GM12878 (cell line): ENCODE measurements at regions of chr7 and their contacts with region 1.

Region 1: DNA sequence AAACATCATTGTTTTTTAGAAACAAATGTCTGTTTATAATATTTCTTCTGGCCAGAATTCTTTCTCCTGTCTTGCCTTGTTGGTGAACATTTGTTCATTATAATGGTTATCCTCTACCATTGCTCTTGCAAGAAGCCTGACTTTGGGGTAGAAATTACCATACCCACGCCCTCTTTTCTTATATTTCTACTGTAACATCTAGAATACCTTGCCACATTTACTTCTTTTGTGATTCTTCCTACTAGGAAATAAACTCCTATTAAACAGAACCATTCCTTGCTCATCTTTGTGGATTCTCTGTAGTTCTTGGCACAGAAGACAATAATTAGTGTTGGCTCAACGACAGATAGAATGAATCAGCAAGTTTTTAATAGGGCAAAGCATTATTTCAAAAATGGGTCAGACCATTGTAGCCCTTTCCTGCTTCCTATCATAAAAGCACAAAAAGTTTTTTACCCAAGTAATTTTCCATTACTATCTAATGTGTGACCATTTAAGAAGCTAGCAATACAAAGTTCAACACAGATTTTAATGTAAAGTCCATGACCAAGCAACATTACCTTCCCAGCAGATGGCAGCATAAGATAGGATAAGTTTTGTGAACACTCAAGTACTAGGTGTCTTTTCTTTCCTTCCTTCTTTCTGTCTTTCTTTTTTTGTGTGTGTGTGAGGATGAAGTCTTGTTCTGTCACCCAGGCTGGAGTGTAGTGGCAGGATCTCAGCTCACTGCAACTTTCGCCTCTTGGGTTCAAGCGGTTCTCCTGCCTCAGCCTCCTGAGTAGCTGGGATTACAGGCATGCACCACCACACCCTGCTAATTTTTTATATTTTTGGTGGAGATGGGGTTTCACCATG is 270.4 kb downstream of the HGF start:
- DNase-seq: peak; percentile 28
- ATAC-seq: peak; percentile 91
- H3K4me3 ChIP-seq: no peak overlapping the region
- H3K27ac ChIP-seq: no peak overlapping the region
- H3K4me1 ChIP-seq: no peaks in the 10 kb centered on the region
- H3K27me3 ChIP-seq: no peaks in the 10 kb centered on the region; a peak in 1 of 4 replicates
- CTCF ChIP-seq: peak; percentile 40 to 72 (median 62); a peak in 5 of 6 replicates
- EP300 ChIP-seq: no peak
- POLR2A ChIP-seq: no peak
- RAD21 ChIP-seq: peak; percentile 91

Region 2: GRCh38 chr7:81488210-81488609 is 11.3 kb before region 1 on chr7:
- CTCF ChIA-PET with region 1: interaction called, 62 read pairs
- POLR2A ChIA-PET with region 1: no interaction called
- RAD21 ChIA-PET with region 1: interaction called, 48 read pairs
- SMC1A ChIA-PET with region 1: interaction called, 43 read pairs
- in situ Hi-C with region 1: no loop called
- intact Hi-C with region 1: no loop called
- DNase-seq: no peak
- ATAC-seq: no peak
- H3K4me3 ChIP-seq: no peak overlapping the region
- H3K27ac ChIP-seq: no peak overlapping the region
- H3K4me1 ChIP-seq: no peaks in the 10 kb centered on the region
- H3K27me3 ChIP-seq: no peaks in the 10 kb centered on the region
- CTCF ChIP-seq: no peak
- EP300 ChIP-seq: no peak
- POLR2A ChIP-seq: no peak
- RAD21 ChIP-seq: no peak

Region 3: GRCh38 chr7:81715984-81716588 is 216.6 kb after region 1 on chr7:
- CTCF ChIA-PET with region 1: interaction called, 79 read pairs
- POLR2A ChIA-PET with region 1: no interaction called
- RAD21 ChIA-PET with region 1: interaction called, 56 read pairs
- SMC1A ChIA-PET with region 1: interaction called, 59 read pairs
- in situ Hi-C with region 1: loop called (anchors 25 kb)
- intact Hi-C with region 1: loop called (anchors 1 kb)
- DNase-seq: no peak
- ATAC-seq: peak; percentile 80
- H3K4me3 ChIP-seq: no peak overlapping the region
- H3K27ac ChIP-seq: no peak overlapping the region
- H3K4me1 ChIP-seq: no peaks in the 10 kb centered on the region
- H3K27me3 ChIP-seq: no peaks in the 10 kb centered on the region
- CTCF ChIP-seq: peak; percentile 14 to 59 (median 26); a peak in 3 of 6 replicates
- EP300 ChIP-seq: no peak
- POLR2A ChIP-seq: no peak
- RAD21 ChIP-seq: peak; percentile 76

Region 4: DNA sequence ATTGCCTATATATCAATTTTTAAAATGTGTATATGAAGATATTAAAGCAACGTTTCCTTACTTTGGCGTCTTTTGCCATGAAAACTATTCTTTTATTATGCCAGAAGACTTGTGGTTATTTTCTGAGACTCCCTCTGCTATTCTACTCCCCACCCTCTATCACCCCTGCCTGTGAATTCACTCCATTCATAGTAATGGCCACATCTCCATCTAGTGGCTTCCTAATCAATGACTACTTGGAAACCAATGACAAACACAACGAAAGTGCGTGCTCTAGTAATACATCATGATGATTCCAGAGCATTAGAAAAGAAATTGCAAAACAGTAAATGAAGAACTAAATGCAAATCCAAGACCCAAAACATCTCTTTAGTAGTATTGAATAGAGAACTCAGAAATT is 457.0 kb after region 1 on chr7:
- CTCF ChIA-PET with region 1: interaction called, 67 read pairs
- POLR2A ChIA-PET with region 1: no interaction called
- RAD21 ChIA-PET with region 1: interaction called, 34 read pairs
- SMC1A ChIA-PET with region 1: interaction called, 84 read pairs
- in situ Hi-C with region 1: loop called (anchors 5 kb)
- intact Hi-C with region 1: loop called (anchors 1 kb)
- DNase-seq: peak; percentile 30
- ATAC-seq: peak; percentile 98
- H3K4me3 ChIP-seq: no peak overlapping the region
- H3K27ac ChIP-seq: no peak overlapping the region
- H3K4me1 ChIP-seq: no peaks in the 10 kb centered on the region
- H3K27me3 ChIP-seq: no peaks in the 10 kb centered on the region
- CTCF ChIP-seq: peak; percentile 52 to 72 (median 66); a peak in 5 of 6 replicates
- EP300 ChIP-seq: no peak
- POLR2A ChIP-seq: no peak
- RAD21 ChIP-seq: peak; percentile 99

Region 5: GRCh38 chr7:82044497-82045080 is 545.1 kb after region 1 on chr7:
- CTCF ChIA-PET with region 1: interaction called, 22 read pairs
- POLR2A ChIA-PET with region 1: interaction called, 3 read pairs
- RAD21 ChIA-PET with region 1: interaction called, 11 read pairs
- SMC1A ChIA-PET with region 1: interaction called, 37 read pairs
- in situ Hi-C with region 1: no loop called
- intact Hi-C with region 1: no loop called
- DNase-seq: no peak
- ATAC-seq: peak; percentile 56
- H3K4me3 ChIP-seq: no peak overlapping the region
- H3K27ac ChIP-seq: no peak overlapping the region
- H3K4me1 ChIP-seq: no peaks in the 10 kb centered on the region
- H3K27me3 ChIP-seq: no peaks in the 10 kb centered on the region
- CTCF ChIP-seq: peak; percentile 42 to 75 (median 47); a peak in 5 of 6 replicates
- EP300 ChIP-seq: no peak
- POLR2A ChIP-seq: no peak
- RAD21 ChIP-seq: peak; percentile 85

Region 6: GRCh38 chr7:82605247-82605872 is 1105.9 kb after region 1 on chr7:
- CTCF ChIA-PET with region 1: interaction called, 83 read pairs
- POLR2A ChIA-PET with region 1: no interaction called
- RAD21 ChIA-PET with region 1: interaction called, 14 read pairs
- SMC1A ChIA-PET with region 1: interaction called, 47 read pairs
- in situ Hi-C with region 1: no loop called
- intact Hi-C with region 1: no loop called
- DNase-seq: no peak
- ATAC-seq: peak; percentile 59; the same call in 2 of the 3 replicates
- H3K4me3 ChIP-seq: no peak overlapping the region
- H3K27ac ChIP-seq: no peak overlapping the region
- H3K4me1 ChIP-seq: no peaks in the 10 kb centered on the region
- H3K27me3 ChIP-seq: no peaks in the 10 kb centered on the region
- CTCF ChIP-seq: peak; percentile 52 to 70 (median 67)
- EP300 ChIP-seq: no peak
- POLR2A ChIP-seq: no peak
- RAD21 ChIP-seq: peak; percentile 73